ENCODE measurements at regions of chr7 and their contacts with region 1.

Region 1: GRCh38 chr7:38215735-38216670 is 38.0 kb downstream of the STARD3NL start:
- DNase-seq: peak; percentile 66 to 75
- ATAC-seq: peak; percentile 88 to 94
- H3K4me3 ChIP-seq: no peak overlapping the region
- H3K27ac ChIP-seq: peak overlapping the region; percentile 33 to 66 (median 42)
- H3K4me1 ChIP-seq: peaks cover 14 to 22% of the 10 kb centered on the region in 2 donors
- H3K27me3 ChIP-seq: no peaks in the 10 kb centered on the region
- CTCF ChIP-seq: peak; percentile 69 to 89 (median 84)
- POLR2A ChIP-seq: no peak

Region 2: DNA sequence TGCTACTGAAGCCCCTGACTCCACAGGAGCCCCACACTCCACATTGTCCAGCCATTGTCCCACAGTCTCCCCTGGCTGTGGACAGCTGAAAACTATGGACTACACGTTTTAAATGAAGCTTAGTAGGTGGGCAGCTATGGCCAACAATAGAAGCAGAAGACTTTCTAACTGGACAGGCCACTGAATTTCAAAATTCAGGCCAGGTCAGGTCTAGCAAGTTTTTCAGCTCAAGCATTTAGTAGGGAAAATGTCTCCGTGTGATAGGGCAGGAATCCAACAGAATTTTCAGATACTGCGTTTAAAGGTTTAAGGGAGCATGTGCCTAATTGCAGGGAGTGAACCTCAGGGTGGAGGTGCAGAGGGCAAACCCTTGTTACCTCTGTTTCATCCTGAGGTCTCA is 654.4 kb before region 1 on chr7:
- in situ Hi-C with region 1: no loop called
- intact Hi-C with region 1: no loop called
- DNase-seq: no peak
- ATAC-seq: no peak
- H3K4me3 ChIP-seq: no peak overlapping the region
- H3K27ac ChIP-seq: no peak overlapping the region
- H3K4me1 ChIP-seq: no peaks in the 10 kb centered on the region
- H3K27me3 ChIP-seq: no peaks in the 10 kb centered on the region
- CTCF ChIP-seq: no peak
- POLR2A ChIP-seq: no peak

Region 3: GRCh38 chr7:38178004-38178694 is 37.9 kb before region 1 on chr7 and contains the start of gene STARD3NL:
- in situ Hi-C with region 1: loop called in 1 of 4 experiments (anchors 10 kb)
- intact Hi-C with region 1: loop called (anchors 2 kb)
- DNase-seq: peak; percentile 98 to 99
- ATAC-seq: peak; percentile 99 to 100
- H3K4me3 ChIP-seq: peak within 1 kb of the TSS; percentile 66 to 96 (median 85)
- H3K27ac ChIP-seq: peak within 1 kb of the TSS; percentile 85 to 96 (median 89)
- H3K4me1 ChIP-seq: peaks cover 24 to 33% of the 10 kb centered on the region in 2 donors
- H3K27me3 ChIP-seq: no peaks in the 10 kb centered on the region
- CTCF ChIP-seq: peak in 2 of 5 experiments; percentile 5 to 32
- POLR2A ChIP-seq: peak; percentile 70 to 76
- total RNA-seq, gene STARD3NL: 18.1 to 22.0 (median 19.7) TPM

Region 4: DNA sequence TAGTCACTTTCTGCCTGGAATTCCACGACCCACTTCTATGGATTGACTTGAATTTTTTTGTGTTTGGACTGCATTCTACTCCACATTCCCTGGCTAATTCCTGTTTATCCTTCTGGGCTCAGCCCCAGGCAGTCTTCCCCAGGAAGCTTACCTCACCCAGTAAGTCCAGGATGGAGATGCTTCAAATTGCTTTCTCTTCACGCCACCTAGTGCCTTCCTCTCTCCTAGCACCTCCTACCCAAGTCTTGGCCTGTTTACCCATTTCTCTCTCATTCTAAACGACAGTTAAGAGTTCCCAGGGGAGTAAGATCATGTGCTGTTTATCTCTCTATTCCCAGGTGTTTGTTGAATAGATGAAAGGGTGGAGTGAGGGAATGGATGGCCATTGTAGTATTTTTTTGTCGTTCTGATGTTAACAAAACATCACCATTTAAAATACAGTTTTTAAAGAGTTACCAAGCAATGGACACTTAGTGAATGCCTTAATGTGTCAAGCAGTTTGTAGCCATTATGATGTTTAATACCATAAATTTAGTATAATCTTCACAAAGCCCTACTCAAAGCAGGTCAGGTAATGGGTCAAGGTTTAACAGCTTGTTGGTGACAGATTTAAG is 102.9 kb after region 1 on chr7:
- in situ Hi-C with region 1: no loop called
- intact Hi-C with region 1: loop called (anchors 5 kb)
- DNase-seq: no peak
- ATAC-seq: peak; percentile 36 to 49
- H3K4me3 ChIP-seq: no peak overlapping the region
- H3K27ac ChIP-seq: no peak overlapping the region
- H3K4me1 ChIP-seq: no peaks in the 10 kb centered on the region
- H3K27me3 ChIP-seq: no peaks in the 10 kb centered on the region
- CTCF ChIP-seq: peak in 4 of 5 experiments; percentile 12 to 35 (median 28)
- POLR2A ChIP-seq: no peak

Measured in gastrocnemius medialis (tissue), 4 donors.